ENCODE measurements at regions of chr17 and their contacts with region 1.

Region 1: DNA sequence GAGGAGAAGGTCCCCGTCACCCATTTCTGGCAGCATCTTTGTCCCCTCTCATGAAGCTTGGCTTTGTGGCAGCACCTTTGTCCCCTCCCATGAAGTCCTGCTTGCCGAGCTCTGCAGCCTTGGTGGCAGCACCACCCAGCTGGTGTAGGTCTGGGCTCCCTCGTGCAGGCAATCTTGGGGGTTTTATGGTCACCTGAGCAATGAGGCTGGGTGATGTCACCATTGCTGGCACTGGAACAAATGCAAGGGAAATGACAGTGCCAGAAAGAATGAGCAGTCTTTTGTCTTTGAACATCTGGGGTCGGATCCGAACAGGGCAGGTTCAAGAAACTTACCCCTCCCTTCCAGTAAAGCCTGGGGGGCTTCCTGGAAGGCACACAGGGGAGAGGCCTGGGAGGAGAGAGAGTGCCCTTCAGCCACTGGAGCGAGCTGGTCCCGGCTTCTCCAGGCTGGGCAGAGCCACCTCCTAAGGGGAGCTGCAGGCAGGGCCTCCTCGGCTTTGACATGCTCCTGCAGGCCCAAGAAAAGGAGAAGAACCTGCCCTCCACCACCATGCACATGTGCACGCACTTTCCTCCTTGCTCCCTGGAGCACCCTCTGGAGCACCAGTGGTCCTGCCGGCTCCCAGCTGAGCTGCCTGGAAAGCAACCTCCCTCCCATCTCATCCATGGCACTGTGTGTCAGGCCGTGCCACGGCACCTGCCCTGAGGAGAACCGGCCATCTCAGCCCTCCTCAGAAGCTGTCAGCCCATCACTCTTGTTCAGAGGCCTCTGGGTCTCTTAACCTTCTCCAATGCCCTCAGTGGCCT is 16.0 kb downstream of the BTBD17 start:
- DNase-seq: no peak

Region 2: DNA sequence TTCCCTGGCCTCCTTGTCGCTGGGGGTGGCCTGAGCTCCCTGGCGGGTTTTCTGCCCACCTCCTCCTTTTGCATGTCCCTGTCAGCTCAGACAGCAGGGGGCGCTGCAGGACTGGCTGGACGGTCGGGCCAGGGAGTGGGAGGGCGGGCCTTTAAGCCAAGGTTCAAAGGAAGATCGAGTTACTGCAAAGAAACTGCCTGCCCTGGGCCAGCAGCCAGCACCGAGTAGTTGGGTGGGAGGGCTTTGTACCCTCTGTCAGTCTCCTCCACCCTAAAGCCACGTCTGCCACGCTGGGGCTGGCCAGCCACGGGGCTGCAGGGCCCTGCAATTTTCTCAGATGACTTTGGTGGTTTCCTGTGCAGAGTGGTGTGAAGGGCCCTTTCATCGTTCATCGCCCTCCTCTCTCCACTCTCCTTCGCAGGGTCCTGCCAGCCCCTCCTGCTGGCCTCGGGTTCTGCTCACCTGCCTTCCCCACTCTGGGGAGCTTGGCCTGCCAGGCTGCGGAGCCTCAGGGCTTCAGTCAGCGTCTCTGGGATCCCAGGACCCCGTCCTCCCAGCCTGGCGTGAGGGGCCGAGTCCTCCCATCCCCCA is 34.0 kb after region 1 on chr17:
- in situ Hi-C with region 1: no loop called
- DNase-seq: peak; percentile 88

Region 3: DNA sequence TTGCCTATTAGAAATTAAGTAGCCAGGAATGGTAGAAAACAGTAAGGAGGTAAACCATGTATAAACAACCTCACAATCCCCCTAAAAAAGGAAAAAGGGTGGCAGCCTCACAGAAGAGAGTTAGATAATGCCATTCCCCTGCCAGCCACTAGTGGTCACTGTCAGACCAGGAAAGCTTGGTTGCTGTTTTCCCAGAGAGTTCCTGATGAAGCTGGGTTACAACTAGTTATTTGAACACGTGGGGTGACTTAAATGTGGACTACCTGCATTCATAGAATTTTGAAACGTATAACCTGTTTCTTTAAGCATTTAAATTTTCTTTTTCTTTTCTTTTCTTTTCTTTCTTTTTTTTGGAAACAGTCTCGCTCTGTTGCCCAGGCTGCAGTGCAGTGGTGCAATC is 92.1 kb after region 1 on chr17:
- in situ Hi-C with region 1: loop called (anchors 5 kb)
- DNase-seq: peak; percentile 47